ENCODE measurements at regions of chr10 and their contacts with region 1.

Region 1: GRCh38 chr10:32005050-32005449 is 51.2 kb downstream of the KIF5B start:
- DNase-seq: no peak
- H3K4me3 ChIP-seq: no peak overlapping the region
- CTCF ChIP-seq: peak; percentile 60

Region 2: DNA sequence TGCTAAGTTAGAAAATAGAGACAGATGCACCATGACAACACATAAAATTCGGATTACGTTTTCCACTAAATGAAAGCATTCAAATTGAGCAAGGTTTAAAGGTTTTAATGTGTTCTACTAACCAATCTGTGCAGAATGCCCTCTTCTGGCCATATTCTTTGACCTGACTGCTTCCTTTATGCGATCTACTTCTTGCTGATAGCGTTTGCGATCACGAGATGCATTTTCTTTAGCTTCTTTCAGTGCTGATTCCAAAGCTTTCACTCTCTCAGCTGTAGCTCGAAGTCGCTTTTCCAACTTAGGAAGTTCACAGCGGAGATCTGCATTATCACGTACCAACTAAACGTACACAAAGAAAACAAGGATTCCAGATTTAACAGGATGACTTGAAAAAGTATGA is 12.0 kb after region 1 on chr10:
- CTCF ChIA-PET with region 1: interaction called, 12 read pairs
- POLR2A ChIA-PET with region 1: no interaction called
- DNase-seq: no peak
- H3K4me3 ChIP-seq: no peak overlapping the region
- CTCF ChIP-seq: no peak

Measured in AG04449 (cell line).